ENCODE measurements at regions of chr2 and their contacts with region 1.

Region 1: GRCh38 chr2:74876081-74876886 is 42.4 kb downstream of the HK2 start:
- DNase-seq: peak in 6 of 10 donors; percentile 16 to 55 (median 42)
- H3K4me3 ChIP-seq: peak overlapping the region in 1 of 59 donors; percentile 9
- H3K27ac ChIP-seq: peak overlapping the region in 32 of 59 donors; percentile 1 to 72 (median 33)
- H3K27me3 ChIP-seq: no peaks in the 10 kb centered on the region
- CTCF ChIP-seq: peak; percentile 68 to 95 (median 83)

Region 2: GRCh38 chr2:74648009-74648443 is 228.3 kb before region 1 on chr2 and contains the start of gene M1AP:
- intact Hi-C with region 1: no loop called
- DNase-seq: no peak
- H3K4me3 ChIP-seq: peak within 1 kb of the TSS in 54 of 59 donors; percentile 9 to 60 (median 37)
- H3K27ac ChIP-seq: no peak within 1 kb of the TSS
- H3K27me3 ChIP-seq: peaks cover 0 to 26% (median 15%) of the 10 kb centered on the region in 45 donors
- CTCF ChIP-seq: no peak
- total RNA-seq, gene M1AP: 0.61 to 5.8 (median 2.8) TPM

Region 3: GRCh38 chr2:74690571-74690970 is 185.7 kb before region 1 on chr2:
- intact Hi-C with region 1: loop called in 1 of 2 experiments (anchors 2 kb)
- DNase-seq: no peak
- H3K4me3 ChIP-seq: no peak overlapping the region
- H3K27ac ChIP-seq: no peak overlapping the region
- H3K27me3 ChIP-seq: no peaks in the 10 kb centered on the region
- CTCF ChIP-seq: peak; percentile 23 to 86 (median 64)

Region 4: DNA sequence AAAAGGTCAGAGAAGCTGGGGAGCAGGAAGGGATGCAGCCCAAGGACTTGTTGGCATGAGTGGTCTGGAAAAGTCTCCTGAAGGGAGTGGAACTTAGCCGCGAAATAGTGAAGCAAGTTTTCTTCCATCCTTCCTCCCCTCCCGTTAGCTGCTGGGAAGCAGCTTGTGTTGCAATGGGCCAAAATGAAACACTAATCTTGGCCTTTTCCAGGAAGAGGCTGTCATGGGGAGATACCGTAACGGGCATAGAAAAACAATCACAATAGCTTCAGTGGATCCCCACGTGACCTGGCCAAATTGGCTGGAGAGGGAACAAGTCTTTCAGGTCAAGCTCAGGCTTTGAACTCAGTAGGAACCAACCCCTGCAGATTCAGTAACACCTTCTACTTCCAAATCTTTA is 172.9 kb before region 1 on chr2:
- intact Hi-C with region 1: no loop called
- DNase-seq: no peak
- H3K4me3 ChIP-seq: no peak overlapping the region
- H3K27ac ChIP-seq: no peak overlapping the region
- H3K27me3 ChIP-seq: peaks cover 0 to 4% (median 0%) of the 10 kb centered on the region in 45 donors
- CTCF ChIP-seq: no peak

Region 5: GRCh38 chr2:74715078-74715791 is 161.0 kb before region 1 on chr2:
- intact Hi-C with region 1: loop called (anchors 1 to 2 kb)
- DNase-seq: peak; percentile 58 to 82 (median 74)
- H3K4me3 ChIP-seq: peak overlapping the region; percentile 46 to 92 (median 66)
- H3K27ac ChIP-seq: peak overlapping the region in 4 of 59 donors; percentile 28 to 67 (median 41)
- H3K27me3 ChIP-seq: peaks cover 0 to 17% (median 0%) of the 10 kb centered on the region in 45 donors
- CTCF ChIP-seq: peak; percentile 56 to 98 (median 93)